ENCODE measurements at regions of chr19 and their contacts with region 1.

Region 1: GRCh38 chr19:19531951-19532805 is 3.5 kb downstream of the YJEFN3 start:
- DNase-seq: peak; percentile 88
- H3K4me3 ChIP-seq: no peak overlapping the region
- H3K27ac ChIP-seq: no peak overlapping the region
- H3K4me1 ChIP-seq: peaks cover 0 to 24% (median 20%) of the 10 kb centered on the region in 4 donors
- H3K27me3 ChIP-seq: peaks cover 0 to 1% (median 0%) of the 10 kb centered on the region in 3 donors
- CTCF ChIP-seq: peak; percentile 75 to 99 (median 89)
- EP300 ChIP-seq: no peak
- POLR2A ChIP-seq: no peak

Region 2: DNA sequence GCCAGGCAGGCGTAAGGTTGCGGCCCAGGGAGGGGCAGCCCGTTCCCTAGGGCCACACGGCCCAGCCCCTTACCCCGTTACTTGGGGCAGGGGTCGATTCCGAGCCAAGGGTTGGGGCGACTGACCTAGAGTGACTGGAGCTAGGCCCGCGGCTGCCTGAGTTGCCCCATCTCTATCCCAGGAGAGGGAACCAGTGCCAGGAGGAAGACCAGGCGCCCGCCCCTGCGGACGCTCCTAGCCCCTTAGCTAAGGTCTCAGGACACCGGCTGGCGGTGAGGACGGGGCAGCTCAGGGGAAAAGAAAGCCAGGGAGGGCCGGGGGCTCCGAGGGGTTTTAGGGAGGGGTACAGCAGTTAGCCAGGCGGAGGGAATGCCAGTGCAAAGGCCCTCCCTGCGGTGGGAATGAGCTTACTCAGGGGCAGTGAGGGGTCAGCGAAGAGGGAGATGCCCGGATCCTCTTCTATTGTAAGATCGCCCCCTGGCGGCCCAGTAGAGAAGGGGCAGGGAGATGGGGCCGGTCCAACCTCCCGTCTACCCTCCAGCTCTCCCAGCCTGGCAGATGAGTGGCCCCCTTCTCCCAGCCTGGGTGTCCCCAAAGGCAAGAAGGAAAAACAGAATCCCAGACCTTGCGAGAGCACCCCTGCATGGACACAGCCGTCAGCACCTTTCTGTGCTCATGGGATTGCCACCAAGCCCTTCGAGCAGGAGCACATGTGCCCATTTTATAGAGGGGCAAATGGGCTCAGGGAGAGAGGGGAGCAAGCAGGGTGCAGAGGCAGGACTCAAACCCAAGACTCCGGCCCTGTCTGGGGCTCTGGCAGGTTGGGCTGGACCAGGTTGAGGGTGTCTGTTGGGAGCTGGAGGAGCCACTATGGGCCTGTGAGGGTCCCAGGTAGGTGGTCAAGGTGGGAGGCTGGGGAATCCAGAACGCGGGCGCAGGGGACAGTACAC is 22.2 kb after region 1 on chr19:
- intact Hi-C with region 1: loop called (anchors 1 kb)
- DNase-seq: no peak
- H3K4me3 ChIP-seq: no peak overlapping the region
- H3K27ac ChIP-seq: no peak overlapping the region
- H3K4me1 ChIP-seq: no peaks in the 10 kb centered on the region
- H3K27me3 ChIP-seq: peaks cover 0 to 17% (median 5%) of the 10 kb centered on the region in 3 donors
- CTCF ChIP-seq: peak in 3 of 4 experiments; percentile 16 to 73 (median 33)
- EP300 ChIP-seq: no peak
- POLR2A ChIP-seq: no peak

Region 3: DNA sequence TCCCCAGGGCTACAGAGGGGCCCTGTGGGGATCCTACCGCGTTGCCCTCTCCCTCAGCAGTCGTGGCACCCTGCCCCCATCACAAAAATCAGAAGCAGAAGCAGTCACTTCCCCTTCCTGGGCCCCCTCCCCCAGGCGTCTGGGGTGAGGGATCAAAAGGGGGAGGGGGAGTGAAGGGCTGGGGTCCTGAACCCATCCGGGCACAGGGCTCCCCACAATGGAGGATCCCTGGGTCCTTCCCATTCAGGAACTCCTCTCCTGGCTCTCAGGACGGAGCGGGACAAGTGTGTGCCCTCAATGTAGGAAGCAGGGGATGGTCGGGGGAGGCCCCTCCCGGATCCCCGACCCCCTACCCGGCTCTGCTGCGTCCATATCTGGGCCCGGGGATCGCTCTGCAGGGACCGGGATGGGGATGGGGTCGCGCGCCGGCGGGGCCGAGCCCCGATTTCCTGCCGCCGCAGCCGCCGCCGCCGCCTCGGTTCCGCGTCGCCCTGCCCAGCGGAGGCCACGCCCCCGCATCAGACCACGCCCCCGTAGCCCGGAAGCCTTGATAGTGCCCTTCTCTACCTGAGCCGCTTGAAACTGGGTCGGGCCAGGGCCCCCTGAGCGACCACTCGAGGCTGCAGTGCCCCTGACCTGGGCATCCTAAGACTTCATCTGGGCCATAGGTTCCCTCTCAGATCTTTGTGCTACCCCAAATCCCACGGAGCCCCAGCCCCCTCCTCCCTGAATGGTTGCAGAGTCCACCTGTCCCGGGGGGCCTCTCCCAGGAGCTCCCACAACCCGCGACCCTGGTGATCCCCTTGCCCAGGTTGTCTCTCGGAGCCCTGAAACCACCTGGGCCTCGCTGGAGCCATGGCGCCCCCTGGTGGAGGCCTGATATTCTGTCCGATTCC is 111.2 kb after region 1 on chr19 and contains the start of gene GMIP:
- intact Hi-C with region 1: loop called (anchors 1 kb)
- DNase-seq: peak; percentile 84
- H3K4me3 ChIP-seq: peak within 1 kb of the TSS; percentile 49 to 82 (median 71)
- H3K27ac ChIP-seq: peak within 1 kb of the TSS; percentile 19 to 73 (median 54)
- H3K4me1 ChIP-seq: peaks cover 0 to 18% (median 10%) of the 10 kb centered on the region in 4 donors
- H3K27me3 ChIP-seq: no peaks in the 10 kb centered on the region
- CTCF ChIP-seq: peak; percentile 65 to 91 (median 86)
- EP300 ChIP-seq: no peak
- POLR2A ChIP-seq: no peak
- total RNA-seq, gene GMIP: 5.0 to 9.1 (median 6.4) TPM

Region 4: GRCh38 chr19:19956434-19957075 is 424.4 kb after region 1 on chr19:
- intact Hi-C with region 1: loop called (anchors 2 kb)
- DNase-seq: no peak
- H3K4me3 ChIP-seq: no peak overlapping the region
- H3K27ac ChIP-seq: no peak overlapping the region
- H3K4me1 ChIP-seq: peaks cover 0 to 3% (median 0%) of the 10 kb centered on the region in 4 donors
- H3K27me3 ChIP-seq: no peaks in the 10 kb centered on the region
- CTCF ChIP-seq: no peak
- EP300 ChIP-seq: no peak
- POLR2A ChIP-seq: no peak

Measured in sigmoid colon (tissue), 7 donors.